ENCODE measurements at regions of chr11 and their contacts with region 1.

Region 1: GRCh38 chr11:30326114-30326778 is 3.3 kb downstream of the ARL14EP start:
- DNase-seq: no peak
- H3K4me3 ChIP-seq: no peak overlapping the region
- H3K27ac ChIP-seq: no peak overlapping the region
- H3K27me3 ChIP-seq: no peaks in the 10 kb centered on the region
- CTCF ChIP-seq: no peak

Region 2: GRCh38 chr11:30314625-30315024 is 11.6 kb before region 1 on chr11:
- CTCF ChIA-PET with region 1: interaction called, 10 read pairs
- POLR2A ChIA-PET with region 1: no interaction called
- DNase-seq: no peak
- H3K4me3 ChIP-seq: no peak overlapping the region
- H3K27ac ChIP-seq: no peak overlapping the region
- H3K27me3 ChIP-seq: no peaks in the 10 kb centered on the region
- CTCF ChIP-seq: peak; percentile 59

Measured in AG04450 (cell line).